ENCODE measurements at regions of chr2 and their contacts with region 1.

Region 1: DNA sequence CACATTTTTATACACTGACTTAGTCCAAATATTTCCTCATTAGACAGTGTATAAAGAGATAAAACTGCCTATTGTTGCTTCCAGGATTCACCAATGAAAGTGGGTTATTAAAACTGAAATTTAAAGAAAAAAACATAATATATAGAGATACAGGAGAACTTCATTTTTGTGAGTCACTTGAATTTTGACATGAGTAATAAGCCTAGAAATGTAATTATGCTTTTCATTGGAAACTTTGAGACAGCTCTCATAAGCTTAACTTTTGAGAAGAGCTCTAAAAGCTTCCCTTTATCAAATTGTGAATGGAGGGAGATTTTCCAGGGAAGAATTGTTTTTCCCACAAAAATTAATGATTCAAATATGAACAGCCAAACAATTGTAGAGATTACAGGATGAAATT is 14.1 kb downstream of the DYNC2LI1 start:
- DNase-seq: no peak
- H3K4me3 Mint-ChIP-seq: no peak overlapping the region
- H3K27ac Mint-ChIP-seq: no peak overlapping the region
- H3K4me1 Mint-ChIP-seq: peaks cover 26% of the 10 kb centered on the region
- H3K27me3 Mint-ChIP-seq: no peaks in the 10 kb centered on the region

Region 2: DNA sequence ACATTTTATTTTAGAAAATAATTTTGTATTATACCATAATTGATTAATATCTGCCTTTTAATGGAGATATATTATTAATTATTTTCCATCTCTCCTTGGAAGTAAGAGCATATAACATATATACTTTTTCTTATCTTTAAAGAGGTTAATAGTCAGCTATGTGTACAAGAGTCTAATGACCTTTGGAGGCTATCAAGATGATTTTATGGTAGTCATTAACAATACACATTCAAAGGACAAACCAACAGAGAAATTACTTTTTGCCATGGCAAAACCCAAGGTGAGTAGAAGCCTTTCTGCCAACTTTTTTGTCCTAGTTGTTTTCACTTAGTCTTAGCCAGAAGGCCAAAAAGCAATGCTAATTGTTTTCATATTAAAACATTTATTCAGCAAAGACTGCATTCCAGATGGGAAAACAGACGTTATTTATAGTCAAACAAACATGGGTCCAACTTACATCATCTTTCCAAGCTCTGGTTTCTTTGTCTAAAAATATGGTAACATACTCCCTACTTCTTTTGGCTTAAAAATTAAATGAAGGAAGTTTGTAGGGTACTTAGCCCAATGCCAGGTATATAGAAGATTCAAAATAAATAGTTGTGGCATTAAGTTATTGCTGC is 23.7 kb before region 1 on chr2:
- CTCF ChIA-PET with region 1: no interaction called
- POLR2A ChIA-PET with region 1: no interaction called
- intact Hi-C with region 1: loop called (anchors 1 kb)
- DNase-seq: no peak
- H3K4me3 Mint-ChIP-seq: no peak overlapping the region
- H3K27ac Mint-ChIP-seq: no peak overlapping the region
- H3K4me1 Mint-ChIP-seq: peaks cover 17% of the 10 kb centered on the region
- H3K27me3 Mint-ChIP-seq: peaks cover 2% of the 10 kb centered on the region

Region 3: DNA sequence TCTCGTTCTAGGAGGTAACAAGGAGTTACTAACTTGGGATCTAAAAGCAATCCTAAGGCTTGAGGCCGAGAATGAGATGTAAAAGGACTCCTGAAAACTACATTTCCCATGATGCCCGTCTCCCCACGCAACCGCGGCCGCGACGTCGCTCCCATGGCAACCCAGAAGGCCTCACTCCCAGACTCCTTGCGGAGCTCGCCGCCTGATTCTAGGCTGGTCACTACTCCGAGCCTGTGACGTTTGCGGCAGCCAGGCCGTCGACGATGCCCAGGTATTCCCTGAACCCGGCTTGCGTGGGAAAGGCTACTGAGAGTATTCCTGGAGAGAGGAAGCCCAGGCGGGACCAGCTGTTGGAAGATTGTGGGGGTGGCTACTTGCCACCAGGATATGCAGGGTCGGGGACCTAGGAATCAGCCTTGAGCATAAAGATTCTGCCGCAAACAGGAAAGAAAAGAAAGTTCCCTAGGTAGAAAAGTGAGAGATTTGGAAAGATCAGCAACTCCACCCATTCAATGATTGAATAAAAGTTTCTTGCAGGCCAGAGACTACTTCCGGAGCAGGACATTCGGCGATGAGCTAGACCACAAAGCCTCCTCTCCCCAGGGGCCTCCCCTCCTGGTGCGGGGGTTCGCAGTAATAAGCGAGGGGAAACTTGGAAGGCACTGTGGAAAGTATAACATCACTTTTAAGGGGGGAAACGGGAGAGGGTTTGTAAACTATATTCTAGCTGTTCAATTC is 13.8 kb before region 1 on chr2 and contains the start of gene DYNC2LI1:
- CTCF ChIA-PET with region 1: no interaction called
- POLR2A ChIA-PET with region 1: interaction called, 3 read pairs
- intact Hi-C with region 1: loop called (anchors 1 kb)
- DNase-seq: peak; percentile 91
- H3K4me3 Mint-ChIP-seq: peak within 1 kb of the TSS; percentile 95
- H3K27ac Mint-ChIP-seq: peak within 1 kb of the TSS; percentile 82
- H3K4me1 Mint-ChIP-seq: peaks cover 25% of the 10 kb centered on the region
- H3K27me3 Mint-ChIP-seq: no peaks in the 10 kb centered on the region
- total RNA-seq, gene DYNC2LI1: 17.7 to 18.7 TPM

Measured in activated CD4-positive, alpha-beta memory T cell treated with anti-CD3 and anti-CD28 coated beads for 36 hours (primary cell).